H1 (cell line): ENCODE measurements at regions of chr2 and their contacts with region 1.

Region 1: DNA sequence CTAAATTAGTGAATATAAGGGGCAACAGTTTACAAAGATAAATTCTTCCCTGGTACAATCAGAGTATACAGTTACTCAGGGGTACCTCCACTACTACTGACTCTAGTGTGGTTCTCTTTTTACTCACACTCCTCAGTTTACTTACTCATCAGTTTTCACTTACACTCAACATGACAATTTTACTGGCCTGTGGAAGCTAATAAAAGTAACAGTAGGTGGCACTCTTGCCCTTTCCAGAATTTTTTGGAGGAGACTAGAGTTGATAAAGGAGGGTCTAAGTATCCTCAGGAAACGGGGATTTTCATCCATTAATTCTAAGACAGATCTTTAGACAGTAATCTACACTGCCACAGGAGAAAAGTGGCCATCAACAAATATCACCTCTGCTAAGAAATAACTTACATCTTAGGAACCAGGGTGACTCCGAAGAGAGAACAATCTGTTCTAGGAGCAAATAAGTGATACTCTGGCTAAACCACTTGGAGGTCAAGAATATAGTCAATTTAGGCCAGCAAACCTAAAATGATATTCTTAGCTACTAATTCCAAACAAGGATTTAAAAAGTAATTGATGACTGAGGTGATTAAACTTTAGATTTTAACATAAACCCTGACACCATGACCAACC is 61.3 kb downstream of the ATL2 start:
- DNase-seq: no peak
- H3K4me3 ChIP-seq: no peak overlapping the region
- H3K27ac ChIP-seq: no peak overlapping the region
- H3K4me1 ChIP-seq: no peaks in the 10 kb centered on the region
- H3K27me3 ChIP-seq: no peaks in the 10 kb centered on the region
- CTCF ChIP-seq: peak in 2 of 3 experiments; percentile 60 to 65; a peak in 2 of 4 replicates
- EP300 ChIP-seq: no peak
- POLR2A ChIP-seq: no peak
- RAD21 ChIP-seq: peak; percentile 87 to 89

Region 2: DNA sequence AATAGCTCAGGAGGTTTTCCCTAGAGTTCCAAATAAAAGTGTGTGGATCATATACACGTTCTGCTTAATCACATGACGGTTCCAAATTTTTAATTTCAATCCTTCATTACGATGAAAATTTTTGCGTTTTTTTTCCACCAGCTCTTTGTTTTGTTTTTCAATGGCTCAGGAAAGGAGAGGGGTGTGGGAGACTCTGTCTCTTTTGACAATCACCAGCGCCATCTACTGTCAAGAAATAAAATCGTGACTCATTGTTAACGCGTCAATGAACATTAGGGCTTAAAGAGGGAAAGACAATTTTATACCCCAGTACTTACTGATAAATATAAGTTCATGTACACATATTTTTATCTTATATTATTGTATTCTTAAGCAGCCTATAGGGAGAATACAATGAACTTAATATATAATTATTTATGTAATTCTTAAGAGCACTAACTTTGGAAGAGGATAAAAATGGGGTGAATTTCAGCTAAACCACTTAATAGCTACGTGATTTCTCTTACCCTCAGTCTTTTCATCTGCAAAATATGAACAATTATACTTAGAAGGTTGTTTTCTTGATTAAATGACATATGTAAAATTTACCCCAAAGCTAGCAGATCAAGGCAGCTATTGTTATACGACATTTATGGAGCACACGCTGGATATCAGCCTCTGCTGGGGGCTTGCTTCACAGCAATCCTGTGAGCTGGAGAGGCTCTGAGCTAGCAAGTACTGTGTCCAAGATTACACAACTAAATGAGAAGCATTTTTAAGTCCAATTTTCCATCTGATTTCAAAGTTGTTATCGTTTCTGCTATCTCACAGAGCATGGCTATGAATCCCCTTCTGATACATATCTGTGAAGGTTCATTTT is 438.1 kb before region 1 on chr2:
- CTCF ChIA-PET with region 1: no interaction called
- POLR2A ChIA-PET with region 1: no interaction called
- DNase-seq: no peak
- H3K4me3 ChIP-seq: no peak overlapping the region
- H3K27ac ChIP-seq: no peak overlapping the region
- H3K4me1 ChIP-seq: peaks cover 4 to 9% (median 4%) of the 10 kb centered on the region in 4 experiments; a peak in 5 of 7 replicates
- H3K27me3 ChIP-seq: no peaks in the 10 kb centered on the region
- CTCF ChIP-seq: peak in 2 of 3 experiments; percentile 55 to 56; a peak in 2 of 4 replicates
- EP300 ChIP-seq: no peak
- POLR2A ChIP-seq: no peak
- RAD21 ChIP-seq: peak; percentile 88 to 91

Region 3: GRCh38 chr2:38327580-38327979 is 11.8 kb after region 1 on chr2:
- CTCF ChIA-PET with region 1: interaction called, 25 read pairs
- POLR2A ChIA-PET with region 1: no interaction called
- DNase-seq: no peak
- H3K4me3 ChIP-seq: no peak overlapping the region
- H3K27ac ChIP-seq: no peak overlapping the region
- H3K4me1 ChIP-seq: no peaks in the 10 kb centered on the region
- H3K27me3 ChIP-seq: no peaks in the 10 kb centered on the region
- CTCF ChIP-seq: no peak
- EP300 ChIP-seq: no peak
- POLR2A ChIP-seq: no peak
- RAD21 ChIP-seq: no peak

Region 4: DNA sequence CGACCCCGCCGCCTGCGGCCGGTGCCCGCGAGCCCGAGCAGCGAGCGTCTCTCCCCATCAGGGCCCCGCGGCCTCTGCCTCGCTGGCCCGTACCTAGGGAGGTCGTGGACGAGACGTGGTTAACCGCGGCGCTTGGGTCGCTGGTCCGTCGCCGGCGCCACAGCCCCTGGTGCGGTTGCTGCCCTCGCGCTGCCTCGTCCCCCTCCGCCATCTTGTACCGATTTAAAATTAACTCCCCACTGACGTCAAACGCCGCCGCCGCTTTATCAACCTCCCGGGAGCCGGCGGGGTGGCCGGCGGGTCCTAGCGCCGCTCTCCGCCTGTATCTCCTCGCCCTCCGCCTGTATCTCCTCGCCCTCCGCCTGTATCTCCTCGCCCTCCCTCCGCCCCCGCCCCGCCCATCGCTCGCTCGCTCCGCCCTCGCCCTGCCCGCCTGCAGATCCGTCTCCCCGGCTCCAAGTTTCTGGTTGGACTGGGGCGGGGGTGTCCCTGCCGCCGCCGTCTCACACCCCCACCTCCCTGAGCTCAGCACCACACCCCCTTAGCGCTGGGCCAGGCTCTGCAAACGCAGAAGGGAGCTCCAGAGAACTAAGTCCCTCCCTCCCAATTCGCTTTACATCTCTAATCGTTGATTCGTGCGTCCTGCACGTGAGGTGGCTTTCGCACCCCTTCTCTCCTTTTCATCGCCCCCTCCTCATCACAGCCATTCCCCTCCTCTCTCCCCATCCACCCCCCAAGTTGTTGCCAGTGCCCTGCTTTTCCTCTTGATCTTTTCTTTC is 61.4 kb after region 1 on chr2 and contains the start of gene ATL2:
- CTCF ChIA-PET with region 1: interaction called, 40 read pairs
- POLR2A ChIA-PET with region 1: interaction called, 3 read pairs
- DNase-seq: peak; percentile 91 to 92
- H3K4me3 ChIP-seq: peak within 1 kb of the TSS; percentile 68 to 99 (median 96)
- H3K27ac ChIP-seq: peak within 1 kb of the TSS; percentile 96
- H3K4me1 ChIP-seq: peaks cover 0 to 5% (median 4%) of the 10 kb centered on the region in 4 experiments; a peak in 3 of 7 replicates
- H3K27me3 ChIP-seq: no peaks in the 10 kb centered on the region; a peak in 1 of 7 replicates
- CTCF ChIP-seq: no peak
- EP300 ChIP-seq: peak in 1 of 2 experiments; percentile 53; a peak in 1 of 3 replicates
- POLR2A ChIP-seq: peak; percentile 88 to 89
- RAD21 ChIP-seq: peak in 1 of 2 experiments; percentile 11; a peak in 1 of 4 replicates
- total RNA-seq, gene ATL2: 82.9 and 84.6 TPM in 2 replicates

Region 5: DNA sequence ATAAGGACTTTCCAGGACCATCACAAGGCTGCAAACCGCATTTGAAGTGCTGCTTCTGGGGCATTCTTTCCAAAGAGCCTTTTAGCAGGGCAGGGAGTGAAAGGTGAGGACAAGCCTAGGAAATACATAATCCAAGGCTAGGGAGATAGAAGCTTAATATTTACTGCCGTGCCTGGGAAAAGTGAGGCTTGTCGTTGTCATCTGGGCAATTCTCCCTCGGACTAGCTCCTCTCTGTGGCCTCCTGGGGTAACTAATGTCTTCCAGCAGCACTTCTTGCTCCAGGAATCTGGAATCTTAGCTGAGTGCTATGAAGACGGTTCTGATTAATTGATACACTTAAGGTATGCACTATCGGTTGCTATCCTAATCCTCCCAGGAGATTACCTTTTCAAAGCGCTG is 130.6 kb after region 1 on chr2:
- CTCF ChIA-PET with region 1: interaction called, 20 read pairs
- POLR2A ChIA-PET with region 1: no interaction called
- DNase-seq: no peak
- H3K4me3 ChIP-seq: no peak overlapping the region
- H3K27ac ChIP-seq: no peak overlapping the region
- H3K4me1 ChIP-seq: peaks cover 4 to 28% (median 10%) of the 10 kb centered on the region in 4 experiments; a peak in 6 of 7 replicates
- H3K27me3 ChIP-seq: no peaks in the 10 kb centered on the region; a peak in 1 of 7 replicates
- CTCF ChIP-seq: peak in 2 of 3 experiments; percentile 13 to 14; a peak in 1 of 4 replicates
- EP300 ChIP-seq: no peak
- POLR2A ChIP-seq: no peak
- RAD21 ChIP-seq: peak; percentile 8 to 38; a peak in 1 of 4 replicates

Region 6: DNA sequence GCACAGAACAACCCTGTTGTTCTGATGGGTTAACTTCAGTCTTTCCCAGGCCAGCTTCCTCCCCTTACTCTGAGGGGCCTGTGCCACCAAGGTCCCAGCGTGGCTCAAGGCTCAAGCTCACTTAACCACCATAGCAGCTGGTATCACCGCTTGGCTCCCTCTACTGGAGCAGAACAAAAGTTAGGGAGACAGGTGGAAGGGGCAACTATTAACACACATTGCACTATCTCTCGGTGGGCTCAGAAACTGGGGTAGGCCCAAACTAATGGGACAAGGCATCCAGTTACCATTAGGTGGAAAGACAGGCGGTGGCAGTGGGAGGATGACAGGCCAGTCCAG is 149.9 kb after region 1 on chr2:
- CTCF ChIA-PET with region 1: interaction called, 32 read pairs
- POLR2A ChIA-PET with region 1: no interaction called
- DNase-seq: peak; percentile 33 to 56
- H3K4me3 ChIP-seq: no peak overlapping the region
- H3K27ac ChIP-seq: no peak overlapping the region
- H3K4me1 ChIP-seq: no peaks in the 10 kb centered on the region
- H3K27me3 ChIP-seq: no peaks in the 10 kb centered on the region
- CTCF ChIP-seq: peak; percentile 48 to 91 (median 80)
- EP300 ChIP-seq: no peak
- POLR2A ChIP-seq: no peak
- RAD21 ChIP-seq: peak; percentile 79 to 88

Region 7: GRCh38 chr2:38498045-38498481 is 182.2 kb after region 1 on chr2:
- CTCF ChIA-PET with region 1: interaction called, 13 read pairs
- POLR2A ChIA-PET with region 1: no interaction called
- DNase-seq: no peak
- H3K4me3 ChIP-seq: no peak overlapping the region
- H3K27ac ChIP-seq: no peak overlapping the region
- H3K4me1 ChIP-seq: peaks cover 3 to 18% (median 6%) of the 10 kb centered on the region in 4 experiments
- H3K27me3 ChIP-seq: no peaks in the 10 kb centered on the region
- CTCF ChIP-seq: no peak
- EP300 ChIP-seq: no peak
- POLR2A ChIP-seq: no peak
- RAD21 ChIP-seq: no peak

Region 8: DNA sequence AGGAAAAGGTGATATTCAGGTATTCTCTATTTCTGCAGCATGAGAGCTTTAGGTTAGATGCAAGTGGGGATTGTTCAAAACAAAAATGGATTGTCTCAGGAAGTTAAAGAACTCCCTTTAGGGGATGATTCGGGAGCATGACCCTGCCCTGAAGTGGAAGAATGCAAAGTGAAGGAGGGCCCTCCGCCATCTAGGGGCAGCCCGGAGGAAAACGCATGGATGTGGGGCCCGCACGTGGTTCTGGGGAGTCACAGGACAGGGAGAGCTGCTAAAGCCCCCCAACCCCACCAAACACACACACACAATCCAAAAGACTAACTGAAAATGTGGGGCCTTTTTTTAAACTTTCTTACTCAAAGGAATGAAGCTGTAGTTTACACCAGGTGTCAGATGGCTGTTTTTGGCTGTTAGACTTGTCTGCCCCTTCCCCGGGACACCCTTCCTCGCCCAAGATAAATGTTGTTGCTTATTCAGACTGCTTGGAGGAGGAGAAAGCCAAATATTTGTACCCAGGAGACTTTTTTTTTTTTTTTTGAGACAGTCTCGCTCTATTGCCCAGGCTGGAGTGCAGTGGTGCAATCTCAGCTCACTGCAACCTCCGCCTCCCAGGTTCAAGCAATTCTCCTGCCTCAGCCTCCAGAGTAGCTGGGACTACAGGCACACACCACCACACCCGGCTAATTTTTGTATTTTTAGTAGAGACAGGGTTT is 208.1 kb after region 1 on chr2:
- CTCF ChIA-PET with region 1: interaction called, 12 read pairs
- POLR2A ChIA-PET with region 1: no interaction called
- DNase-seq: peak in 1 of 2 experiments; percentile 72
- H3K4me3 ChIP-seq: no peak overlapping the region
- H3K27ac ChIP-seq: no peak overlapping the region
- H3K4me1 ChIP-seq: peaks cover 4 to 11% (median 6%) of the 10 kb centered on the region in 4 experiments; a peak in 6 of 7 replicates
- H3K27me3 ChIP-seq: 0 out of 7 replicates have a peak, but pooled peaks cover 0 to 2% (median 0%) of the 10 kb centered on the region in 4 experiments
- CTCF ChIP-seq: peak; percentile 46 to 72 (median 71)
- EP300 ChIP-seq: no peak
- POLR2A ChIP-seq: no peak
- RAD21 ChIP-seq: peak; percentile 47 to 62